ENCODE measurements at regions of chr16 and their contacts with region 1.

Region 1: DNA sequence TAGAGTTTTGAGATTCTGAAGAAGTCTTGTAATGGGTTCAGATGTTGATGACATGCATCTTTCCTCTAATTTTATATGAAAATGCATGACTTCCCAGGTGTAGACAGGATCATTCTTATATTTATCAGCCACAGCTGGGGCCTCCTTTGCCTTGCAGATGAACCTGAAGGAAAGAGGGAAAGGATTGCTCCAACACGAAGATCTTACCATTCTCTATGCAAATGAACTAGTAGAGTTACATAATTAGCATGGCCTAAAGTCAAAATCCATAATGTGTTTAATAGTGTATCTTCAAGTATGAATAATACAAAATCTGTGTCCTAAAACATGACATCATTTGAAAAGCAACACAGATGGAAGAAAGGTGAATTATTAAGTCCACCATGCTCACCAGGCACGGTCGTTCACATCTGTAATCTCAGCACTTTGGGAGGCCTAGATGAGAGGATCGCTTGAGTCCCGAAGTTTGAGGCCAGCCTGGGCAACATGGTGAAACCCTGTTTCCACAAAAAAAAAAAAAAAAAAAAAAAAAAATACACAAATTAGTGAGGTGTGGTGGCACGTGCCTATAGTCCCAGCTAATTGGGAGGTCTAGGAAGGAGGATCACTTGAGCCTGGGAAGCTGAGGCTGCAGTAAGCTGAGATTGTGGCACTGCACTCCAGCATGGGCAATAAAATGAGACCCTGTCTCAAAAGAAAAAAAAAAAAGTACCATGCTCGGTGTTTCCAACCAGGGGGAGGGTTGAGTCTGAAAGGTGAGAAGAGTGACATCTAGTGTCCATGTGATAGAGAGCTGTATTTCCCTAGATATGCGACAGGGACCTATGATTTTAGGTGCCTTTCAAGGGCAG is 6.3 kb downstream of the VWA3A start:
- DNase-seq: peak; percentile 61
- H3K4me3 Mint-ChIP-seq: peak overlapping the region; percentile 49
- H3K27ac Mint-ChIP-seq: no peak overlapping the region
- H3K4me1 Mint-ChIP-seq: no peaks in the 10 kb centered on the region
- H3K27me3 Mint-ChIP-seq: peaks cover 21% of the 10 kb centered on the region
- CTCF ChIP-seq: peak; percentile 60

Region 2: GRCh38 chr16:21952793-21953540 is 145.7 kb before region 1 on chr16 and contains the start of gene UQCRC2:
- CTCF ChIA-PET with region 1: interaction called, 12 read pairs
- POLR2A ChIA-PET with region 1: no interaction called
- intact Hi-C with region 1: loop called (anchors 1 kb)
- DNase-seq: peak; percentile 95
- H3K4me3 Mint-ChIP-seq: peak within 1 kb of the TSS; percentile 99
- H3K27ac Mint-ChIP-seq: peak within 1 kb of the TSS; percentile 99
- H3K4me1 Mint-ChIP-seq: peaks cover 7% of the 10 kb centered on the region
- H3K27me3 Mint-ChIP-seq: no peaks in the 10 kb centered on the region
- CTCF ChIP-seq: no peak
- total RNA-seq, gene UQCRC2: 199 and 207 TPM in 2 replicates

Region 3: GRCh38 chr16:22001591-22001990 is 97.0 kb before region 1 on chr16:
- CTCF ChIA-PET with region 1: interaction called, 87 read pairs
- POLR2A ChIA-PET with region 1: interaction called, 4 read pairs
- intact Hi-C with region 1: loop called (anchors 1 kb)
- DNase-seq: no peak
- H3K4me3 Mint-ChIP-seq: peak overlapping the region; percentile 56
- H3K27ac Mint-ChIP-seq: no peak overlapping the region
- H3K4me1 Mint-ChIP-seq: peaks cover 22% of the 10 kb centered on the region
- H3K27me3 Mint-ChIP-seq: no peaks in the 10 kb centered on the region
- CTCF ChIP-seq: no peak

Region 4: GRCh38 chr16:22070361-22071330 is 28.0 kb before region 1 on chr16:
- CTCF ChIA-PET with region 1: interaction called, 63 read pairs
- POLR2A ChIA-PET with region 1: interaction called, 4 read pairs
- intact Hi-C with region 1: no loop called
- DNase-seq: peak; percentile 63
- H3K4me3 Mint-ChIP-seq: no peak overlapping the region
- H3K27ac Mint-ChIP-seq: no peak overlapping the region
- H3K4me1 Mint-ChIP-seq: peaks cover 2% of the 10 kb centered on the region
- H3K27me3 Mint-ChIP-seq: no peaks in the 10 kb centered on the region
- CTCF ChIP-seq: no peak

Region 5: GRCh38 chr16:22117609-22118008 is 19.0 kb after region 1 on chr16:
- CTCF ChIA-PET with region 1: interaction called, 25 read pairs
- POLR2A ChIA-PET with region 1: interaction called, 3 read pairs
- intact Hi-C with region 1: no loop called
- DNase-seq: no peak
- H3K4me3 Mint-ChIP-seq: no peak overlapping the region
- H3K27ac Mint-ChIP-seq: no peak overlapping the region
- H3K4me1 Mint-ChIP-seq: no peaks in the 10 kb centered on the region
- H3K27me3 Mint-ChIP-seq: peaks cover 22% of the 10 kb centered on the region
- CTCF ChIP-seq: no peak

Region 6: DNA sequence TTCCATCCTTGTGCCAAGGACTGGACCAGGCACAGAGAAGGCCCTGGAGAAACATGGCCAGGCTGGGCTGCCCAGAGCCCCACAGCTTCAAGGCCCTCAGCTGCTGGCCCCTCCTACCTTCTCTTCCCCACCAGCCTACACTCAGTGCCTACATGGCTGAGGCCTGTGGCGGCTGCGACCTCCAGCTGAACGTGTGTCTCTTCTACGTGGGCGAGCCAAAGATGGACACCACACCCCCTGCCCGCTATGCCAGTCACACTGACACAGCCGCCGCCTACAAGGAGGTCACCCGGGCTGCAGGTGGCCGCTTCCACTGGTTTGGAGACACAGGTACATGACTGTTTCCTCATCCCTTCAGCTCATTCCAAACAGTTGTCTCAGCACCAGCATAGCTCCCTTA is 34.1 kb after region 1 on chr16:
- CTCF ChIA-PET with region 1: no interaction called
- POLR2A ChIA-PET with region 1: no interaction called
- intact Hi-C with region 1: no loop called
- DNase-seq: no peak
- H3K4me3 Mint-ChIP-seq: no peak overlapping the region
- H3K27ac Mint-ChIP-seq: no peak overlapping the region
- H3K4me1 Mint-ChIP-seq: no peaks in the 10 kb centered on the region
- H3K27me3 Mint-ChIP-seq: peaks cover 45% of the 10 kb centered on the region
- CTCF ChIP-seq: no peak

Measured in MCF 10A (cell line).